Activated CD4-positive, alpha-beta T cell treated with anti-CD3 and anti-CD28 coated beads for 36 hours (primary cell): ENCODE measurements at regions of chr18 and their contacts with region 1.

Region 1: GRCh38 chr18:6543330-6543908 is 128.7 kb upstream of the L3MBTL4 start:
- DNase-seq: no peak
- ATAC-seq: no peak
- H3K4me3 Mint-ChIP-seq: no peak overlapping the region
- H3K27ac Mint-ChIP-seq: no peak overlapping the region
- H3K4me1 Mint-ChIP-seq: no peaks in the 10 kb centered on the region
- H3K27me3 Mint-ChIP-seq: peaks cover 5% of the 10 kb centered on the region

Region 2: DNA sequence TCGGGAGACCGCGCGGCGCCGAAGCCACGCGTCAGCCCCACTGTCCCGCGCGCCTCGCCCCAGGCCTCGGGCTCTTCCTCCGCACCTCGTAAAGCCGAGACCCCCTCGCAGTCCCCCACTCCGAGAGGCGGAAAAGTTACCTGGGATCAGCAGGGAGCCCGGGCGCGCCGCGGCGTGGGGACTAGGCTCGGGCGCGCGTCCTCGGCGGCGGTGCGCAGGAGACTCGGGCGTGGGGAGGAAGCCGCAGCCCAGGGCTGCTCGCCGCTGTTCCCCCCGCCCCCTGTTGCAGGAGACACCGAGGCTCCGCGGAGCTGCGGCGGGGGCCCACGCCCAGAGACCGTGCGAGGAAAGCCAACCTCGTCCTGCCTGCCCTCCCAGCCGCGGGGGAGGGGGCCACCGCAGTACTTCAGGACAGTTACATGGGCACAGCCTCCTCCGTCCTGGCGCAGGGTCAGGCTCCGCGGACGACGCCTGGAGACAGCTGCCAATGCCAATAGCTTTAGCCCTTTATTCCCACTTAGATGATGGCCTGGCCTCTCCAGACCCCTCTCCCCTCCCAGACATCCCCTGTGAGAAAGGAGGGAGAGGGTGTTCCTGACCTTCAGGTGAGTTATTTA is 999.5 kb before region 1 on chr18 and contains the start of gene EPB41L3:
- CTCF ChIA-PET with region 1: no interaction called
- POLR2A ChIA-PET with region 1: no interaction called
- intact Hi-C with region 1: no loop called
- DNase-seq: peak; percentile 46
- ATAC-seq: peak; percentile 75
- H3K4me3 Mint-ChIP-seq: peak within 1 kb of the TSS; percentile 59
- H3K27ac Mint-ChIP-seq: no peak within 1 kb of the TSS
- H3K4me1 Mint-ChIP-seq: peaks cover 3% of the 10 kb centered on the region
- H3K27me3 Mint-ChIP-seq: peaks cover 35% of the 10 kb centered on the region
- total RNA-seq, gene EPB41L3: 10.4 to 13.4 TPM

Region 3: DNA sequence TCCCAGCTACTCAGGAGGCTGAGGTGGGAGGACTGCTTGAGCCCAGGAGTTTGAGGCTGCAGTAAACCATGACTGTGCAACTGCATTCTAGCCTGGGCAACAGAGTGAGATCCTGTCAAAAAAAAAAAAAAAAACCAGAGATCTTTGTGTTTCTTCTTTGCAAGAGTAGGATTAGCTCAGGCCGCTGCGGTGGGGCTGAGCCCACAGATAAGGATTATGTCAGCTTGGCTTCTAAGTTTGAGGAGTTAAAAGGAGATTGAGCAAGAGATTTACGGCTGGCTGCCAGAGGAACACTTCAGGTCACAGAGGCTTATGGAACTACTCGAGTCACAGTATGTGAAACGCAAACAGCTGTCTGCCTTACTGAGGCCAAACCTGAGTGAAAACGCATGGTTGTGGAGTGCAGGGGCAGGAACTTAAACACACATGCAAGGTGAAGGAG is 18.0 kb after region 1 on chr18:
- CTCF ChIA-PET with region 1: no interaction called
- POLR2A ChIA-PET with region 1: no interaction called
- intact Hi-C with region 1: no loop called
- DNase-seq: no peak
- ATAC-seq: no peak
- H3K4me3 Mint-ChIP-seq: no peak overlapping the region
- H3K27ac Mint-ChIP-seq: no peak overlapping the region
- H3K4me1 Mint-ChIP-seq: no peaks in the 10 kb centered on the region
- H3K27me3 Mint-ChIP-seq: peaks cover 10% of the 10 kb centered on the region

Region 4: GRCh38 chr18:6857300-6857699 is 313.9 kb after region 1 on chr18:
- CTCF ChIA-PET with region 1: no interaction called
- POLR2A ChIA-PET with region 1: no interaction called
- intact Hi-C with region 1: no loop called
- DNase-seq: no peak
- ATAC-seq: no peak
- H3K4me3 Mint-ChIP-seq: no peak overlapping the region
- H3K27ac Mint-ChIP-seq: no peak overlapping the region
- H3K4me1 Mint-ChIP-seq: no peaks in the 10 kb centered on the region
- H3K27me3 Mint-ChIP-seq: no peaks in the 10 kb centered on the region

Region 5: GRCh38 chr18:6885992-6886796 is 342.8 kb after region 1 on chr18:
- CTCF ChIA-PET with region 1: interaction called, 13 read pairs
- POLR2A ChIA-PET with region 1: no interaction called
- intact Hi-C with region 1: loop called (anchors 1 kb)
- DNase-seq: peak; percentile 34
- ATAC-seq: no peak
- H3K4me3 Mint-ChIP-seq: no peak overlapping the region
- H3K27ac Mint-ChIP-seq: no peak overlapping the region
- H3K4me1 Mint-ChIP-seq: no peaks in the 10 kb centered on the region
- H3K27me3 Mint-ChIP-seq: peaks cover 2% of the 10 kb centered on the region

Region 6: GRCh38 chr18:7021994-7022840 is 478.8 kb after region 1 on chr18:
- CTCF ChIA-PET with region 1: no interaction called
- POLR2A ChIA-PET with region 1: no interaction called
- intact Hi-C with region 1: loop called in 1 of 2 experiments (anchors 5 kb)
- DNase-seq: peak; percentile 36
- ATAC-seq: peak; percentile 57
- H3K4me3 Mint-ChIP-seq: no peak overlapping the region
- H3K27ac Mint-ChIP-seq: no peak overlapping the region
- H3K4me1 Mint-ChIP-seq: no peaks in the 10 kb centered on the region
- H3K27me3 Mint-ChIP-seq: no peaks in the 10 kb centered on the region

Region 7: GRCh38 chr18:7177116-7177744 is 633.8 kb after region 1 on chr18:
- CTCF ChIA-PET with region 1: no interaction called
- POLR2A ChIA-PET with region 1: no interaction called
- intact Hi-C with region 1: loop called in 1 of 2 experiments (anchors 2 kb)
- DNase-seq: peak; percentile 45
- ATAC-seq: peak; percentile 36
- H3K4me3 Mint-ChIP-seq: no peak overlapping the region
- H3K27ac Mint-ChIP-seq: no peak overlapping the region
- H3K4me1 Mint-ChIP-seq: no peaks in the 10 kb centered on the region
- H3K27me3 Mint-ChIP-seq: no peaks in the 10 kb centered on the region